Dendritic cell treated with granulocyte-macrophage colony-stimulating factor and Interleukin-4, amounts not matched to agents 40 ng/mL and 50 ng/mL, for 4 days (primary cell): ENCODE measurements at regions of chr17 and their contacts with region 1.

Region 1: GRCh38 chr17:50560185-50560824 is at the start of gene CACNA1G:
- H3K4me3 Mint-ChIP-seq: peak within 1 kb of the TSS; percentile 76
- H3K27ac Mint-ChIP-seq: peak within 1 kb of the TSS; percentile 16
- H3K4me1 Mint-ChIP-seq: peaks cover 33% of the 10 kb centered on the region
- H3K27me3 Mint-ChIP-seq: peaks cover 79% of the 10 kb centered on the region

Region 2: GRCh38 chr17:50620858-50621257 is 60.6 kb after region 1 on chr17:
- intact Hi-C with region 1: loop called (anchors 5 kb)
- H3K4me3 Mint-ChIP-seq: no peak overlapping the region
- H3K27ac Mint-ChIP-seq: peak overlapping the region; percentile 29
- H3K4me1 Mint-ChIP-seq: peaks cover 76% of the 10 kb centered on the region
- H3K27me3 Mint-ChIP-seq: peaks cover 15% of the 10 kb centered on the region